Aorta (tissue), 5 donors: ENCODE measurements at regions of chr5 and their contacts with region 1.

Region 1: DNA sequence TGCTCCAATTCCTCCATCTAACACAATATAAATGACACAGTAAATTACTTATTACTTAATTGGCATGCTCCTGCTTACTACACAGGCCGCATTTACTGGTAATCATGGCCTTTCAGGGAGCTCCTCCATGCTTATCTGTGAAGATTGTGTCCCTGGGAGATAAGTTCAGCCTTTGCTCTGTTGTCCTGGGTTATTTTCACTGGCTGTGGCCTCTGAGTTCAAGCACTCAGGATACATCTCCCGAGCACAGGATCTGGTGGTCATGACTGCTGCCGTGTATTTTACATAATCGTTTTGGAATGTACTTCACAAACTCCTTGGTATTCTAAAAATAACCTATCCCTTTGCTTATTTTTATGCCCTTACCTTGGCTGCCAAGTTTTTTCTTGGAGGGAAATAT is 215.7 kb downstream of the ICE1 start:
- DNase-seq: no peak
- ATAC-seq: peak; percentile 76
- H3K4me3 ChIP-seq: no peak overlapping the region
- H3K27ac ChIP-seq: peak overlapping the region; percentile 67 to 80
- H3K4me1 ChIP-seq: peaks cover 5 to 13% of the 10 kb centered on the region in 2 donors
- H3K27me3 ChIP-seq: no peaks in the 10 kb centered on the region

Region 2: GRCh38 chr5:5572010-5572865 is 66.0 kb before region 1 on chr5:
- intact Hi-C with region 1: loop called in 1 of 2 experiments (anchors 5 kb)
- DNase-seq: peak; percentile 84 to 94
- ATAC-seq: peak; percentile 89
- H3K4me3 ChIP-seq: no peak overlapping the region
- H3K27ac ChIP-seq: peak overlapping the region; percentile 57 to 82
- H3K4me1 ChIP-seq: peaks cover 2 to 3% of the 10 kb centered on the region in 2 donors
- H3K27me3 ChIP-seq: no peaks in the 10 kb centered on the region

Region 3: GRCh38 chr5:5592541-5592940 is 45.7 kb before region 1 on chr5:
- intact Hi-C with region 1: loop called (anchors 5 kb)
- DNase-seq: peak in 1 of 2 donors; percentile 75
- ATAC-seq: peak; percentile 70
- H3K4me3 ChIP-seq: no peak overlapping the region
- H3K27ac ChIP-seq: peak overlapping the region in 1 of 2 donors; percentile 50
- H3K4me1 ChIP-seq: no peaks in the 10 kb centered on the region
- H3K27me3 ChIP-seq: no peaks in the 10 kb centered on the region

Region 4: DNA sequence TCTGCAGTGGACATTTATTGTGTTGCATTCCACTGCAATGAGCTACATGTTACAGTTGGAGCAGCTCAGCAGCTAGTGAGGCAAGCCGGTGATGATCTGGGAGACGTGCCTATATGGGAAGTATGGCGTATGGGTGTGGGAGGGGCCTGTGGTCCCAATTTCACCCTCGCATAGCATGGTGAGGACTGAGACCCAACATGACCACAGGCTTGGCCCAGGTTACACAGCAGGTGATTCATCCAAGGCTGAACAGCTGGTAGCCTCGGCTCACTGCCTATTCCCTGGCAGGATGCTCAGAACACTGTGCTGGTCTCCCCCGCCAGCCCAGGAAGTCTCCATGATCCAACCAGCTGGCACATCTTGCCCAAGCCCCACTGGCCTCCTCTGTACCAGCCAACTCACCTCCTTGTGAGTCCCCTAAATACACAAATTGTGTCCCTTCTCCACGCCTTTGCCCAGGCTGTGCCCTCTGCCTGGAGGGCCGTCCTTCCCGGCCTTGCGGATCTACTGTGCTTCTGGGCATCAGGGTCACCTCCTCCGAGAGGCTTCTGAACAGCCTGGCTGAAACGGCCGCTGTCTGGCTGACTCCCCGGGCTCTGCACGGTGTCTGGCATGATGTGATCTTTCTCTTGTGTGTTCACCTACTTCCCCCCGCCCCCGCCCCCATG is 913.2 kb after region 1 on chr5:
- intact Hi-C with region 1: loop called in 1 of 2 experiments (anchors 10 kb)
- DNase-seq: peak; percentile 85 to 87
- ATAC-seq: peak; percentile 63
- H3K4me3 ChIP-seq: no peak overlapping the region
- H3K27ac ChIP-seq: peak overlapping the region; percentile 2 to 28
- H3K4me1 ChIP-seq: no peaks in the 10 kb centered on the region
- H3K27me3 ChIP-seq: no peaks in the 10 kb centered on the region